ENCODE measurements at regions of chrX and their contacts with region 1.

Region 1: GRCh38 chrX:21374163-21374993 is at the start of gene CNKSR2:
- DNase-seq: peak; percentile 74
- ATAC-seq: peak; percentile 77
- H3K4me3 Mint-ChIP-seq: peak within 1 kb of the TSS; percentile 92
- H3K27ac Mint-ChIP-seq: peak within 1 kb of the TSS; percentile 86
- H3K4me1 Mint-ChIP-seq: peaks cover 30% of the 10 kb centered on the region
- H3K27me3 Mint-ChIP-seq: no peaks in the 10 kb centered on the region
- CTCF ChIP-seq: no peak
- total RNA-seq, gene CNKSR2: 15.6 and 15.7 TPM in 2 replicates

Region 2: GRCh38 chrX:20951411-20951810 is 423.0 kb before region 1 on chrX:
- CTCF ChIA-PET with region 1: no interaction called
- POLR2A ChIA-PET with region 1: no interaction called
- intact Hi-C with region 1: no loop called
- DNase-seq: no peak
- ATAC-seq: no peak
- H3K4me3 Mint-ChIP-seq: no peak overlapping the region
- H3K27ac Mint-ChIP-seq: no peak overlapping the region
- H3K4me1 Mint-ChIP-seq: no peaks in the 10 kb centered on the region
- H3K27me3 Mint-ChIP-seq: peaks cover 3% of the 10 kb centered on the region
- CTCF ChIP-seq: no peak

Region 3: GRCh38 chrX:21408307-21408706 is 33.9 kb after region 1 on chrX:
- CTCF ChIA-PET with region 1: no interaction called
- POLR2A ChIA-PET with region 1: interaction called, 11 read pairs
- intact Hi-C with region 1: no loop called
- DNase-seq: no peak
- ATAC-seq: no peak
- H3K4me3 Mint-ChIP-seq: no peak overlapping the region
- H3K27ac Mint-ChIP-seq: no peak overlapping the region
- H3K4me1 Mint-ChIP-seq: peaks cover 5% of the 10 kb centered on the region
- H3K27me3 Mint-ChIP-seq: no peaks in the 10 kb centered on the region
- CTCF ChIP-seq: no peak

Region 4: GRCh38 chrX:21438792-21439191 is 64.4 kb after region 1 on chrX:
- CTCF ChIA-PET with region 1: no interaction called
- POLR2A ChIA-PET with region 1: interaction called, 16 read pairs
- intact Hi-C with region 1: loop called (anchors 1 kb)
- DNase-seq: no peak
- ATAC-seq: peak; percentile 88
- H3K4me3 Mint-ChIP-seq: peak overlapping the region; percentile 76
- H3K27ac Mint-ChIP-seq: peak overlapping the region; percentile 91
- H3K4me1 Mint-ChIP-seq: peaks cover 37% of the 10 kb centered on the region
- H3K27me3 Mint-ChIP-seq: no peaks in the 10 kb centered on the region
- CTCF ChIP-seq: no peak

Measured in activated B cell treated with CpG ODN at 0.5 μM for 24 hours (primary cell).